MCF 10A (cell line): ENCODE measurements at regions of chr18 and their contacts with region 1.

Region 1: GRCh38 chr18:5295981-5296705 is 617 bp upstream of the ZBTB14 start:
- DNase-seq: peak; percentile 91
- H3K4me3 Mint-ChIP-seq: peak overlapping the region; percentile 95
- H3K27ac Mint-ChIP-seq: peak overlapping the region; percentile 88
- H3K4me1 Mint-ChIP-seq: peaks cover 6% of the 10 kb centered on the region
- H3K27me3 Mint-ChIP-seq: peaks cover 26% of the 10 kb centered on the region
- CTCF ChIP-seq: no peak

Region 2: DNA sequence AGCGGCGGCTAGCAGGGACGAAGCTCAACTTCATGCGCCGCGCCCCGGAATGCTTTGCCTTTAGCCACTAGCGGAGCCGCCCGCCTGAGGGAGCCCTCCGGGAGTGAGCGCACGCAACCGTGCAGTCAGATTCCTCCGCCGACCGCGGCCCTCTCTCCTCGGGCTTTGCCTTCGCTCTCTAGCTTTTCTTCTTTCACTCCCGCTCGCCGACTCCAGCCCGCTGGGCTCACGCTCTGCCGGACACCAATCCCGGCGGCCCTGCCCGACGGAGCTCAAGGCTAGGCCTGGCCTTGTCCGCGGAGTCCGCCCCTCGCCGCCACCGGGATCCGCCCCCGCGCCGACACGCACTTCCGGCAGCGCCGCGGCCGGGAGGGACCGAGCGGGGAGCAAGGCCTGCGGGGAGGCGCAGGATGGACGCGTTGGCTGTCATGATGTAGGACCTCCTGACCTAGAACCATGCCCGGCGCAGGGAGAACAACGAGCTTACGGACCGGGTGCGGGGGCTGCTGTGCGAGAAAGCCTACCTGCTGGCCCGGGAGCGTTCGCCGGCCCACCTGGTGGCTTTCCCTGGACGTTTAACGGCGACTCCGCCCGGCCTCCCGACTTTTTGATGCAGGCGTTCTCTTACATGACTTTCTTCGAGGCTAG is 58.3 kb before region 1 on chr18:
- CTCF ChIA-PET with region 1: no interaction called
- POLR2A ChIA-PET with region 1: interaction called, 33 read pairs
- intact Hi-C with region 1: loop called (anchors 5 kb)
- DNase-seq: peak; percentile 69
- H3K4me3 Mint-ChIP-seq: peak overlapping the region; percentile 89
- H3K27ac Mint-ChIP-seq: peak overlapping the region; percentile 98
- H3K4me1 Mint-ChIP-seq: no peaks in the 10 kb centered on the region
- H3K27me3 Mint-ChIP-seq: peaks cover 12% of the 10 kb centered on the region
- CTCF ChIP-seq: no peak

Region 3: DNA sequence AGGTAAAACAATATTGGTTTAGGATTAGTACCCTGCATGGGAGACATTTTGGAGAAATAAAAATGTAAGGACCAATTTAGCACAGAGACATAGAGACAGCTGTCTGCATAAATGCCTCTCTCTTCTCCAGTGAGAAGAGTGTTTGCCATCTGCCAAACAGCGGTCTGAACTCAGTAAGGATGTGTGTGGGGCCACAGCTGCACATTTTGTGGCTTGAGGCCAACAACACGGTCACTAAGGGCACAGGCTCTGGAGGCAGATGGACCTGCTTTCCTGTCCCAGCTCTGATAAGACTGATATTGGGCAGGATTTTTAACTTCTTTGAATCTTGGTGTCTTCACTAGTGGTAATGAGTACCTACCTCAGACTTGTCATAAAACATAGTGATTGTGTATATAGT is 10.8 kb before region 1 on chr18:
- CTCF ChIA-PET with region 1: no interaction called
- POLR2A ChIA-PET with region 1: interaction called, 22 read pairs
- intact Hi-C with region 1: no loop called
- DNase-seq: no peak
- H3K4me3 Mint-ChIP-seq: no peak overlapping the region
- H3K27ac Mint-ChIP-seq: no peak overlapping the region
- H3K4me1 Mint-ChIP-seq: no peaks in the 10 kb centered on the region
- H3K27me3 Mint-ChIP-seq: no peaks in the 10 kb centered on the region
- CTCF ChIP-seq: no peak

Region 4: DNA sequence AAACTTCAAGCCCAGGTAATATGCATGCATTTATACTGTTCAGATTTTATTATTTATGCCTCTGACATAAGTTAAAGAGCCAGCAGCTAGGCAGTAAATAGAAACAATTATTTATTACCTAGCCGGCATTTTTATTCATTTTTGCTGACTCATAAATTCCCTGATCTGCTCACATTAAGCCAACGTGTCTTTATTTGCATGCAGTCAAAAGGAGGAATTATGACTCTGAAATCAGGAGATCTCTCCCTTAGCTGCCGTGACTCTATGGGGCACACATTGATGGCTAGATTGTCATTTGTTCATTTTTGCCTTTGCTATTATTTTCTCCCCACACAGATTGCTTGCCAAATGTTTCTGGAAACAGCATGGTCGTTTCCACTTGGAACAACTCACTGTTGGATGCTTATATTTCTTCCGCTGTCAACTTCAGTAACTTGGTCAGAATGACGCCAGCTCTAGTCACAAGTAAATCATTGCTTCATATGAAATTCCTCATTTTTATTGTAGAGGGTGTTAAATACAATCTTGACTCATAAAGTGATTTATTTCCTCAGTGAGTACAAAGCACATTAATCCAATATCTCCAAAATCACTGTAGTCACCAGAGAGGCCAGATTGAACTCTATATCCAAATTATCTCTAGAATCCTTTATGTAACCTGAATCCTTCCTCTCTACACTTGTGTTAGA is 15.3 kb after region 1 on chr18:
- CTCF ChIA-PET with region 1: interaction called, 3 read pairs
- POLR2A ChIA-PET with region 1: interaction called, 13 read pairs
- intact Hi-C with region 1: no loop called
- DNase-seq: peak; percentile 20
- H3K4me3 Mint-ChIP-seq: no peak overlapping the region
- H3K27ac Mint-ChIP-seq: no peak overlapping the region
- H3K4me1 Mint-ChIP-seq: peaks cover 6% of the 10 kb centered on the region
- H3K27me3 Mint-ChIP-seq: no peaks in the 10 kb centered on the region
- CTCF ChIP-seq: no peak

Region 5: DNA sequence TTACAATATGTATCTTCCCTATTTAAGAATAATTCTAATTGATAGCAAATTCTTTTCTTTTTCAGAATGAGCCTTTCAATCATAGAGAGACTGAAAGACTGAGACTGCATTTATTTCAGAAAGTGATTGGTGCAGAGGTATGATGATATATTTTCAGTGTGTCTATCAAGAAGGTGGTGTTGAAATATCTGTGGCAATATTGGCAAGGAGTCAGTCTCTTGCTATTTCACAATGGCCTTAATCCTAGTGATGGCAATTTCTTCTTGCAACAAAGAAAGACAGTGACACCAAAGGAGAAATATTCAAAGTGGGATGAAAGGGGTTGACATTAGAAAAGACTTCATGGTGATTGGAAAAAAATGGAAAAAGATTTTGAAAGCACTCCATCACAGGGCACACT is 21.0 kb after region 1 on chr18:
- CTCF ChIA-PET with region 1: no interaction called
- POLR2A ChIA-PET with region 1: interaction called, 13 read pairs
- intact Hi-C with region 1: no loop called
- DNase-seq: peak; percentile 67
- H3K4me3 Mint-ChIP-seq: no peak overlapping the region
- H3K27ac Mint-ChIP-seq: no peak overlapping the region
- H3K4me1 Mint-ChIP-seq: no peaks in the 10 kb centered on the region
- H3K27me3 Mint-ChIP-seq: no peaks in the 10 kb centered on the region
- CTCF ChIP-seq: no peak